ENCODE measurements at regions of chr2 and their contacts with region 1.

Region 1: DNA sequence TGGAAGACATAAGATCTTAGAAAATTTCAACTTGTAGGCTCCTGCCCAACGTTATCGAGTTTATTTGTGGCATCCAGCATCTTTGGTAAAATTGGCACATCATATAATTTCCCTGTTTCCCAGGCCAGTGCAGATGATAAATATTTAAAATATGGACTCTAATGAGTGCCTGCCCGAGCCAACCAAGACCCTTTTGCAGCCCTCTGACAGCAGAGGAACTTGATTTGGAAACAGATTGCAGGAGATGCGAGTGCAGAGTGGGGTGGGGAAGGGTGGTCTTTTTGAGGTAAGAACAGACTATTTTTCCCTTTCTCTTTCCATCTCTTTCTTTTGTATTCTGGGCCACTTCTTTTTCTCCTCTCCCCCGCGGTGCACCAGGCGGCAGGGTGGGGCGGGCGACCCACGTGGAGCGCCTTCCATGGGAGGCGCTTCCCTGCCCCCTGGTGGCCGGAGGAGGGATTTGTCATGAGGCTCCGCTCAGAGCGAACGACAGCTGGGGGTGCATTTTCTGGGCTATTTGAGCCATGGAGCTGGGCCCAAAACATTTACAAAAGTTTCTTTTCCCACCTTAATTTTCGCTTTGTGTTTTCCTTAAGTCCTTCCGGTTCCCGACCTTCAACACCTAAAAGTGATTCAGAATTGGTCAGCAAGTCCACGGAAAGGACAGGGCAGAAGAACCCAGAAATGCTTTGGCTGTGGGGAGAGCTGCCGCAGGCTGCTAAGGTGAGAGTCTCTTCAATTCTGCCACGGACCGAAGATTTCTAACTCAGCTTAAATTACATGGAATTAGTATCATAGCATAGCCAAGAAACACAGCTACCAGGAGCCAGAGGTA is 32.7 kb downstream of the LPIN1 start:
- DNase-seq: no peak
- ATAC-seq: peak; percentile 97
- H3K4me3 ChIP-seq: no peak overlapping the region
- H3K27ac ChIP-seq: no peak overlapping the region
- H3K4me1 ChIP-seq: peaks cover 7% of the 10 kb centered on the region
- H3K27me3 ChIP-seq: no peaks in the 10 kb centered on the region
- CTCF ChIP-seq: peak; percentile 92 to 95 (median 94)
- EP300 ChIP-seq: no peak
- POLR2A ChIP-seq: no peak
- RAD21 ChIP-seq: peak; percentile 97

Region 2: GRCh38 chr2:11187083-11187619 is 592.0 kb before region 1 on chr2:
- CTCF ChIA-PET with region 1: no interaction called
- POLR2A ChIA-PET with region 1: no interaction called
- RAD21 ChIA-PET with region 1: no interaction called
- SMC1A ChIA-PET with region 1: no interaction called
- in situ Hi-C with region 1: no loop called
- intact Hi-C with region 1: no loop called
- DNase-seq: no peak
- ATAC-seq: no peak
- H3K4me3 ChIP-seq: no peak overlapping the region
- H3K27ac ChIP-seq: no peak overlapping the region
- H3K4me1 ChIP-seq: no peaks in the 10 kb centered on the region
- H3K27me3 ChIP-seq: no peaks in the 10 kb centered on the region
- CTCF ChIP-seq: no peak
- EP300 ChIP-seq: no peak
- POLR2A ChIP-seq: no peak
- RAD21 ChIP-seq: no peak

Region 3: DNA sequence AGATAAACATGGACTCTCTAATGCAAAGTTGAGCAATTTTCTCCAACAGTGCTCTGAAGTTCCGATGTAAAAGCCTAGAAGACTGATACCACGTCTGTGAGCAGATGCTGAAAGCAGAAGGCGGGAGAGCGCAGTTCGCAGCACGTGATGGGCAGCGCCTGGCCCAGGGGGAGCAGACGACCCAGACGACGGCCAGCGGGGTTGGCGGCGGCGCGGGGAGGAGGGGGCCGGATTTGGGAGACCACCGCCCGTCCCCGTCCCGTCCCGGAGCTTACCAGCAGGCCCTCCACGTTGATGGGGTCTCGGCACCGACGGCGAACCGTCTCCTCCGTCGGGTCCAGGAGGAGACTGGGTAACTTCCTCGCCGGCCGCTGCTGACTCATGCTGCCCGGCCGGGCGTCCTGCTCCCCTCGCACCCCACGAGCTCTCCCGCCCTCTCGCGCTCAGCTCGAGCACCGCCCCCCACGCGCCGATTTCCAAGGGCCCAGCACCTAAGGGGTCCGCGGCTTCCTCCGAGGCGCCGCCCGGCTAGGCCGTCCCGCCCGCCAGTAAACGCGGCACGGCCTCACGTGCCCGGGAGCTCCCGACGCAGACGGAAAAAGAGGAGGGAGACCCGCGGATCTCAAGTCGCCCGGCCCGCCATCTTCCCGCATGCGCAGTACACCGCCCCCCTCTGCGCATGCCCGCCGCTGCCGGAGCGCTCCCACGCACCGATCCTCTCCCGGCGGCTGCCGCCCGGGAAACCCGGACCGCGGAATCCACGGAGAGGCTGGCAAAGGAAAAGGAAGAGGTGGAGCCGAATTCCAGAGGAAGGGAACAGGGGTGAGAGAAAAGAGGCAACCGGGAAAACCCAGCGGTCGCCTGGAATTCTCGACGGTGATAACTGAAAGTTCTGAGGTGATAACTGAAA is 313.4 kb before region 1 on chr2 and contains the start of gene E2F6:
- CTCF ChIA-PET with region 1: no interaction called
- POLR2A ChIA-PET with region 1: no interaction called
- RAD21 ChIA-PET with region 1: no interaction called
- SMC1A ChIA-PET with region 1: no interaction called
- in situ Hi-C with region 1: no loop called
- intact Hi-C with region 1: loop called (anchors 10 kb)
- DNase-seq: peak; percentile 24
- ATAC-seq: peak; percentile 84
- H3K4me3 ChIP-seq: peak within 1 kb of the TSS; percentile 86
- H3K27ac ChIP-seq: peak within 1 kb of the TSS; percentile 63
- H3K4me1 ChIP-seq: peaks cover 13% of the 10 kb centered on the region; the same call in 1 of the 2 replicates
- H3K27me3 ChIP-seq: no peaks in the 10 kb centered on the region
- CTCF ChIP-seq: no peak
- EP300 ChIP-seq: 0 out of 4 replicates have a peak, but pooled peaks of 1 of the 2 experiments have one; percentile 13
- POLR2A ChIP-seq: peak; percentile 76
- RAD21 ChIP-seq: no peak
- polyA plus RNA-seq, gene E2F6: 4.2 to 5.3 TPM

Region 4: GRCh38 chr2:11590193-11590592 is 188.9 kb before region 1 on chr2:
- CTCF ChIA-PET with region 1: no interaction called
- POLR2A ChIA-PET with region 1: no interaction called
- RAD21 ChIA-PET with region 1: no interaction called
- SMC1A ChIA-PET with region 1: no interaction called
- in situ Hi-C with region 1: no loop called
- intact Hi-C with region 1: no loop called
- DNase-seq: no peak
- ATAC-seq: no peak
- H3K4me3 ChIP-seq: no peak overlapping the region
- H3K27ac ChIP-seq: no peak overlapping the region
- H3K4me1 ChIP-seq: no peaks in the 10 kb centered on the region
- H3K27me3 ChIP-seq: peaks cover 2% of the 10 kb centered on the region in 2 experiments; a peak in 1 of 4 replicates
- CTCF ChIP-seq: no peak
- EP300 ChIP-seq: no peak
- POLR2A ChIP-seq: no peak
- RAD21 ChIP-seq: no peak

Region 5: GRCh38 chr2:11681722-11682589 is 97.2 kb before region 1 on chr2:
- CTCF ChIA-PET with region 1: interaction called, 353 read pairs
- POLR2A ChIA-PET with region 1: no interaction called
- RAD21 ChIA-PET with region 1: interaction called, 3 read pairs
- SMC1A ChIA-PET with region 1: interaction called, 8 read pairs
- in situ Hi-C with region 1: no loop called
- intact Hi-C with region 1: no loop called
- DNase-seq: no peak
- ATAC-seq: peak; percentile 88
- H3K4me3 ChIP-seq: no peak overlapping the region
- H3K27ac ChIP-seq: no peak overlapping the region
- H3K4me1 ChIP-seq: no peaks in the 10 kb centered on the region
- H3K27me3 ChIP-seq: peaks cover 5 to 12% of the 10 kb centered on the region in 2 experiments; a peak in 3 of 4 replicates
- CTCF ChIP-seq: peak; percentile 61 to 91 (median 86)
- EP300 ChIP-seq: no peak
- POLR2A ChIP-seq: no peak
- RAD21 ChIP-seq: peak; percentile 58

Region 6: DNA sequence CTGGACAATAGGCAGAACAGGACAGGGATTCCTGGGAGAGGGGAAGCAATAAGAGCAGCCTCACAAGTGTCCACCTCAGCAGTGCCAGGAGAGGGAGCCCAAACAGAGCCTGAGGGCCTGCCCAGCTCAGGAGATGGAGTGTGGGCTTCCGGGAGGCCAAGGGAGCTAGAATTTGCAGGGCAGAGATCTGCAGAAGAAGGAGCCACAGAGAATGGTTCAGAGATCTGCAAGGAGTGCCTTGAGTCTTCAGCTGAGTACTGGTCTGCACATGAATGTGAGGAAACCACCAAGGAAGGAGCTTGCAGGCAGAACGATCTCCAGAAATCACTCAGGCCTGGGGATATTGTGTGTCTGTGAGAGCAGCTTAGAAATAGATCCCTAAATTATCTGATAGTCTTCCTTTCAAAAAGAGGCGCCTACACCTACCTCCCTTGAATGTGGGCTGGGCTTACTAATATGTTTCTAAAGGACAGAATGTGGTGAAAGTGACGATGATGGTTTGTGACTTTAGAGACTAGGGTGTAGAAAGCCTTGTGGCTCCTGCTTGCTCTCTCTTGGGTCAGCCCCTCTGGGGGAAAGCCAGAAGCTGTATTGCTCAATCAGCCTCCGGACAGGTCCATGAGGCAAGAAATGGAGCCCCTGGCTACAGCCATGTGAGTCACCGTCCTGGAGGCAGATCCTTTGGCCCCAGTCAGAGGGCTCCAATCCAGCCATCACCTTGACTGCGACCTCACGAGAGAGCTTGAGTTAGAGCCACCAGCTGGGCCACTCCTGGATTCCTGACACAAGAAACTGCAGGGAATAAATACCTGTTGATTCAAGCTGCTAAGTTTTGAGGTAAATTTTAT is 40.3 kb before region 1 on chr2:
- CTCF ChIA-PET with region 1: interaction called, 684 read pairs
- POLR2A ChIA-PET with region 1: interaction called, 3 read pairs
- RAD21 ChIA-PET with region 1: interaction called, 132 read pairs
- SMC1A ChIA-PET with region 1: interaction called, 222 read pairs
- in situ Hi-C with region 1: no loop called
- intact Hi-C with region 1: loop called (anchors 1 kb)
- DNase-seq: no peak
- ATAC-seq: peak; percentile 96
- H3K4me3 ChIP-seq: no peak overlapping the region
- H3K27ac ChIP-seq: no peak overlapping the region
- H3K4me1 ChIP-seq: peaks cover 9% of the 10 kb centered on the region
- H3K27me3 ChIP-seq: peaks cover 0 to 5% of the 10 kb centered on the region in 2 experiments; a peak in 1 of 4 replicates
- CTCF ChIP-seq: peak; percentile 46 to 70 (median 67)
- EP300 ChIP-seq: no peak
- POLR2A ChIP-seq: no peak
- RAD21 ChIP-seq: peak; percentile 77

Region 7: GRCh38 chr2:11743846-11744553 is 35.1 kb before region 1 on chr2:
- CTCF ChIA-PET with region 1: interaction called, 684 read pairs
- POLR2A ChIA-PET with region 1: interaction called, 13 read pairs
- RAD21 ChIA-PET with region 1: interaction called, 132 read pairs
- SMC1A ChIA-PET with region 1: interaction called, 222 read pairs
- in situ Hi-C with region 1: no loop called
- intact Hi-C with region 1: loop called (anchors 2 kb)
- DNase-seq: peak; percentile 82
- ATAC-seq: peak; percentile 73
- H3K4me3 ChIP-seq: peak overlapping the region; percentile 1; the same call in 1 of the 2 replicates
- H3K27ac ChIP-seq: peak overlapping the region; percentile 4; the same call in 1 of the 2 replicates
- H3K4me1 ChIP-seq: peaks cover 39% of the 10 kb centered on the region
- H3K27me3 ChIP-seq: no peaks in the 10 kb centered on the region
- CTCF ChIP-seq: no peak
- EP300 ChIP-seq: no peak; a peak in 2 of 4 replicates
- POLR2A ChIP-seq: peak; percentile 26; the same call in 1 of the 2 replicates
- RAD21 ChIP-seq: no peak

Region 8: GRCh38 chr2:11753886-11754699 is 25.0 kb before region 1 on chr2:
- CTCF ChIA-PET with region 1: interaction called, 684 read pairs
- POLR2A ChIA-PET with region 1: interaction called, 13 read pairs
- RAD21 ChIA-PET with region 1: interaction called, 49 read pairs
- SMC1A ChIA-PET with region 1: interaction called, 222 read pairs
- in situ Hi-C with region 1: no loop called
- intact Hi-C with region 1: loop called (anchors 2 kb)
- DNase-seq: peak; percentile 48
- ATAC-seq: peak; percentile 38
- H3K4me3 ChIP-seq: peak overlapping the region; percentile 66
- H3K27ac ChIP-seq: peak overlapping the region; percentile 97
- H3K4me1 ChIP-seq: peaks cover 59% of the 10 kb centered on the region
- H3K27me3 ChIP-seq: no peaks in the 10 kb centered on the region
- CTCF ChIP-seq: no peak
- EP300 ChIP-seq: no peak
- POLR2A ChIP-seq: peak; percentile 60; the same call in 1 of the 2 replicates
- RAD21 ChIP-seq: no peak

Region 9: DNA sequence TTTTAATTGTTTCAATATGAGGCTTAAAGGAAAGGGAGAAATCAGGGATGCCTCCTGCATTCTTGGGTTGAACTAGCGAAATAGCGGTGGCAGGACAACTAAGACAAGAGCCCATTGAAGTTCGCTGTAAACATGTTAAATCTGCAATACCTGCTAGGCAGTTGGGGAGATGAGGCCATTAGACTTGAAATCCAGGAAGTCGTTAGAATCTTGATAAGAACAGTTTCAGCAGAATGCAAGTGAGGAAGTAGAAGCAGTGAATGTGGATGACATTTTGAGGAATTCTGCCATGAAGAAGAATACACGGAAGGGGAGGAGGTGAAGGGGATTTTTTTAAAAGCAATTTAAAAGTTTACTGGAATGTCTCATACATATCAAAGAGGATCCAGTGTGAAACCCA is 77.0 kb after region 1 on chr2:
- CTCF ChIA-PET with region 1: no interaction called
- POLR2A ChIA-PET with region 1: no interaction called
- RAD21 ChIA-PET with region 1: no interaction called
- SMC1A ChIA-PET with region 1: no interaction called
- in situ Hi-C with region 1: no loop called
- intact Hi-C with region 1: no loop called
- DNase-seq: no peak
- ATAC-seq: no peak
- H3K4me3 ChIP-seq: no peak overlapping the region
- H3K27ac ChIP-seq: no peak overlapping the region
- H3K4me1 ChIP-seq: peaks cover 17% of the 10 kb centered on the region
- H3K27me3 ChIP-seq: no peaks in the 10 kb centered on the region
- CTCF ChIP-seq: no peak
- EP300 ChIP-seq: no peak
- POLR2A ChIP-seq: no peak
- RAD21 ChIP-seq: no peak

Measured in GM12878 (cell line).